CD4-positive, alpha-beta T cell (primary cell): ENCODE measurements at regions of chr12 and their contacts with region 1.

Region 1: DNA sequence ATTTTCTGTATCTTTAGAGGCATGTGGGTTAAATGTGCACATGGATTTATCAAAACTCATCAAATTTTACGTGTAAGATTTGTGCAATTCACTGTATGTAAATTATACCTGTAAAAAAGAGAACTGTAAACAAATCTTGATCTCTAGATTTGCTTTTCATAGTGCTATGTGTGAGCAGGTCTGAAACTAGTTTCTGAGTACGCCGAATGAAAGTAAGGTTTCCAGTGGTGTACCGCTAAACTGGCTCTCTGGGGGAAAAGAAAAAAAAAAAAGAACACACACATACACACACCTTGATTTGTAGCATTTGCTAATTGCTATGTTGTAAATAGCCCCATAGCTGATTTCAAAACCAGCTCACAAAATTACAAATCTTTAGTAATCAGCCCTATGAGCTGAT is 8.6 kb upstream of the SLC41A2 start:
- DNase-seq: no peak
- ATAC-seq: no peak
- H3K4me3 ChIP-seq: no peak overlapping the region
- H3K4me3 Mint-ChIP-seq: no peak overlapping the region
- H3K27ac ChIP-seq: no peak overlapping the region
- H3K27ac Mint-ChIP-seq: no peak overlapping the region
- H3K4me1 ChIP-seq: no peaks in the 10 kb centered on the region
- H3K4me1 Mint-ChIP-seq: no peaks in the 10 kb centered on the region
- H3K27me3 ChIP-seq: no peaks in the 10 kb centered on the region
- H3K27me3 Mint-ChIP-seq: peaks cover 29% of the 10 kb centered on the region
- CTCF ChIP-seq: no peak

Region 2: GRCh38 chr12:105041186-105041585 is 74.5 kb after region 1 on chr12:
- CTCF ChIA-PET with region 1: no interaction called
- POLR2A ChIA-PET with region 1: no interaction called
- intact Hi-C with region 1: loop called in 1 of 2 experiments (anchors 5 kb)
- DNase-seq: no peak
- ATAC-seq: no peak
- H3K4me3 ChIP-seq: no peak overlapping the region
- H3K4me3 Mint-ChIP-seq: no peak overlapping the region
- H3K27ac ChIP-seq: no peak overlapping the region
- H3K27ac Mint-ChIP-seq: no peak overlapping the region
- H3K4me1 ChIP-seq: peaks cover 15% of the 10 kb centered on the region
- H3K4me1 Mint-ChIP-seq: peaks cover 23% of the 10 kb centered on the region
- H3K27me3 ChIP-seq: no peaks in the 10 kb centered on the region
- H3K27me3 Mint-ChIP-seq: no peaks in the 10 kb centered on the region
- CTCF ChIP-seq: no peak

Region 3: DNA sequence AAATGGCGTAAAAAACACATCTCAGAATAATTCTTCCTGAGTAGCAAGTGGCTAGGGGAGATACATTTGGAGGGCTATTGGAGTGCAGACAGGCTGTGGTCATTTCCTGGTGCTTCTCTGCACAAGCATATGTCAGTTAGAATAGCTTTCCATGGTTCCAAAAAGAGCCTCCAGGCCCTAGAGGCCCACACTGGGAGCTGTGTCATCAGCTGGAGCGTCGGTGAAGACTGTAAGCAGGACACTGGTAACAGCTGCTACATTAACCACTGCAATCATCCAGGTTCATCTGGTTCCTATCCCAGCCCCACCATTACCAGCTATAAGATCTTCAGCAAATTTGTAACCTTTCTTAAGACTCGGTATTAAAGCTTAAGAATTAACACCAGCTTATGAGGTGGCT is 301.0 kb after region 1 on chr12:
- CTCF ChIA-PET with region 1: no interaction called
- POLR2A ChIA-PET with region 1: no interaction called
- intact Hi-C with region 1: no loop called
- DNase-seq: no peak
- ATAC-seq: no peak
- H3K4me3 ChIP-seq: no peak overlapping the region
- H3K4me3 Mint-ChIP-seq: no peak overlapping the region
- H3K27ac ChIP-seq: no peak overlapping the region
- H3K27ac Mint-ChIP-seq: no peak overlapping the region
- H3K4me1 ChIP-seq: no peaks in the 10 kb centered on the region
- H3K4me1 Mint-ChIP-seq: no peaks in the 10 kb centered on the region
- H3K27me3 ChIP-seq: no peaks in the 10 kb centered on the region
- H3K27me3 Mint-ChIP-seq: no peaks in the 10 kb centered on the region
- CTCF ChIP-seq: no peak

Region 4: DNA sequence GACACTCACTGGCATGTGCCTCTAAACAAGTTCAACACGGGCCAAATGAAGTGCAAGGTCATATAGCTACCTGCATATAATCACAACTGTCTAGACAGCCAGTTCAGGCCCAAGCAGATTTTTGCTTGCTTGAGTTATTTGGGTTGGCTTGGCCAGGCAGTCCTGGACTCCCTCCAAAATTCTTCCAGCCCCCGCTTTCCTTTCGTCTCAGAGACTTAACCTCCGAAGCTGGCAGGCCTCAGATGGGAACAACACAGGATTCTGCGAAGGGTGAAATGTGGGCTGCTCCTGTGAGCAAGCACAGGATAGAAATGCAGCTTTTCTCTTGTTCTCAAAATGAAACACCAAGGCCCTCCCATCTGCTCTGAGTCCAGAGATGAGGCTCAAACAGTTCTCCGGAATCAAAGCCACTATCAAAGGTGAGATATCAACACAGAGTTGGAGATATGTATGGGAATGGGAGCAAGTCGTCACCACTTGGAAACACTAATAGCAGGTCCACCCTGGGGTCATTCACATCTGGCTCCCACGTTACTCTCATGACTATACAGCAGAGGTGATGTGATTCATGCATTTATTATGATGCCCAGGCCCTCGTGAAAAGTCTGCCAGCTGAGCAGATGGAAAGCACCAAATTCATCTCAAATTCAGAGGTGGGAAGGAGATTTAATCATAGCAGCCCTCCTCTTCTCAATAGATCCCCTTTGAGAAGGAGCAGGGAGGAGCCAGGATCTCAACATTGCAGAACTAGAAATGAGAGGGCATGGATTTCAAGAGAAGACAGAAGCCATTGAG is 782.3 kb after region 1 on chr12:
- CTCF ChIA-PET with region 1: no interaction called
- POLR2A ChIA-PET with region 1: no interaction called
- intact Hi-C with region 1: no loop called
- DNase-seq: no peak
- ATAC-seq: no peak
- H3K4me3 ChIP-seq: no peak overlapping the region
- H3K4me3 Mint-ChIP-seq: no peak overlapping the region
- H3K27ac ChIP-seq: no peak overlapping the region
- H3K27ac Mint-ChIP-seq: no peak overlapping the region
- H3K4me1 ChIP-seq: no peaks in the 10 kb centered on the region
- H3K4me1 Mint-ChIP-seq: no peaks in the 10 kb centered on the region
- H3K27me3 ChIP-seq: no peaks in the 10 kb centered on the region
- H3K27me3 Mint-ChIP-seq: no peaks in the 10 kb centered on the region
- CTCF ChIP-seq: no peak